ENCODE measurements at regions of chr6 and their contacts with region 1.

Region 1: DNA sequence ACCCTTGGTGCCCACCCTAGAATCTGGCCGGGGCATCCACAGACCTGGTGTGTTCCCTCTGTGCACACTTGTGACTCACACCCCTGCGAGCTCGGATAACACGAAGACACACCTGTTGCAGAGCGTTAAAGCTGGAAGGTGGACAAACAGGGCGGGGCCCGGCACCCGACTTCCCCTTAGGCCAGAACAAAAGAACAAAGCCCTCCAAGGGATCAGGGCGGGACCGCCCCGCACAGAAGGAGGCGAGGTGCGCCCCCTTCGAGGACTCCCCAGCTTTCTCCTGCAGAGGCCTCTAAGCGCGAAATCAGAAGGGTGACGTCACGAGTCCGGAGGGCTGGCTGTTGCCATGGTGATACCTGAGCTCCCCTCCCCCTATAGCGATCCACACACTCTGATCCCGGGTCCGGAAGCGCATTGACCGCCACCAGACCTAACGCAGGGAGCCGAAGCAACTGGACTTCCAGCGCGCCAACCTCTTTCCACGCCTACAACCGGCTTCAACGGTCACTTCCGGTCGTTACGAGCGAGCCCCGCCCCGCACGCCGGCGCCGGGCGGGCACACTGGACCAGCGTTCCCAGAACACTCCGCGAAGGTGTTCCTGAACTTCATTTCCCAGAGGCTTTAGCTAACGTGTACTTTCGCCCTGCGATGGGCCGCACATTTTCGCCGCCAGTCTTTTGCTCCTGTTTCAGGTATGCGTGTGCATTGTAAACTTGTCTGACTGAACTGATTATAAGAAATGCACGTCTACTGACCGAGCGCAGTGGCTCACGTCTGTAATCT is at the start of gene ZNF184:
- DNase-seq: peak; percentile 85
- H3K4me3 Mint-ChIP-seq: peak within 1 kb of the TSS; percentile 89
- H3K27ac Mint-ChIP-seq: peak within 1 kb of the TSS; percentile 93
- H3K4me1 Mint-ChIP-seq: peaks cover 46% of the 10 kb centered on the region
- H3K27me3 Mint-ChIP-seq: no peaks in the 10 kb centered on the region
- total RNA-seq, gene ZNF184: 7.6 and 8.0 TPM in 2 replicates

Region 2: DNA sequence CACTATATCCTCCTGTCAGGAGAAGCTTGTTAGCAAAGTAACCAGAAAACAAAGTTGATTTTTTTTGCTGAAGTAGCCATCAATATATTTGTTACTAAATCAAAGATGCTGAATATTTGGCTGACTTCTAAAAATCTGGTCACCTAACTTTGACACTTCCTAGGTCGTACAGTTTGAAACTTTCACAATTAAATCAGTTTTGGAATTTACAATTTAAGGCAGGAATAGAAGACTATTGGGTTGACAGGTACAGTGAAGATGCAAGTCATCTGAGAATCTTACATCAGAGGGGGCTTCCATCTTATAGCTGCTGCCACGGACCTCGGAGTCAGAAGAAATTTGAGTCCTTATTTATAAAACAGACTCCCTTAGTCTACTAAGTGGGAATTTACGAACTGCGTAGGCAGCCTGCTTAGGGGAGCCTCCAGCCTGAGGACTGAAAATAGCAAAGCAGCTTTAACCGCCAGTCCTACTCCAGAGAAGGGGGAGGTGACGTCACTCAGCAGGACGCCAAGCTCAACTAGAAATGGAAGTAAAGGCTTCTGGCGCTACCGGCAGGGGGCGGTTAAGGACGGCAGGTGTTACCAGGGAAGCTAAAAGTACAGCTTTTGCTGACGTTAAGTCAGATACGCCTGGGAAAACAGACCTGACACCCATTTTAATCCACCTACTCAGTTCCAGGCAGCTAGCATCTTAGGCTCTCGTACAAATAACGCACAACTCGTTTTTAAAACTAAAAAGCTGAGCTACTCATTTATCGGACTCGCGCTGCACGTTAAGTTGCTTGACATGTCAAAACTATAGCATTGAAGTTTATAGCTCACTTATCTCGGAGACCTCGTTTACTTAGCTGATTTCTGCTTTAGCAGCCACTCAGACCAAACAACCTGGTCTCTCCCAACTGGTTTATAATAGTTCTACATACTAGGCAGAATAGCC is 1446.6 kb before region 1 on chr6:
- intact Hi-C with region 1: loop called (anchors 5 kb)
- DNase-seq: peak; percentile 88
- H3K4me3 Mint-ChIP-seq: peak overlapping the region; percentile 85
- H3K27ac Mint-ChIP-seq: peak overlapping the region; percentile 96
- H3K4me1 Mint-ChIP-seq: peaks cover 93% of the 10 kb centered on the region
- H3K27me3 Mint-ChIP-seq: no peaks in the 10 kb centered on the region

Region 3: DNA sequence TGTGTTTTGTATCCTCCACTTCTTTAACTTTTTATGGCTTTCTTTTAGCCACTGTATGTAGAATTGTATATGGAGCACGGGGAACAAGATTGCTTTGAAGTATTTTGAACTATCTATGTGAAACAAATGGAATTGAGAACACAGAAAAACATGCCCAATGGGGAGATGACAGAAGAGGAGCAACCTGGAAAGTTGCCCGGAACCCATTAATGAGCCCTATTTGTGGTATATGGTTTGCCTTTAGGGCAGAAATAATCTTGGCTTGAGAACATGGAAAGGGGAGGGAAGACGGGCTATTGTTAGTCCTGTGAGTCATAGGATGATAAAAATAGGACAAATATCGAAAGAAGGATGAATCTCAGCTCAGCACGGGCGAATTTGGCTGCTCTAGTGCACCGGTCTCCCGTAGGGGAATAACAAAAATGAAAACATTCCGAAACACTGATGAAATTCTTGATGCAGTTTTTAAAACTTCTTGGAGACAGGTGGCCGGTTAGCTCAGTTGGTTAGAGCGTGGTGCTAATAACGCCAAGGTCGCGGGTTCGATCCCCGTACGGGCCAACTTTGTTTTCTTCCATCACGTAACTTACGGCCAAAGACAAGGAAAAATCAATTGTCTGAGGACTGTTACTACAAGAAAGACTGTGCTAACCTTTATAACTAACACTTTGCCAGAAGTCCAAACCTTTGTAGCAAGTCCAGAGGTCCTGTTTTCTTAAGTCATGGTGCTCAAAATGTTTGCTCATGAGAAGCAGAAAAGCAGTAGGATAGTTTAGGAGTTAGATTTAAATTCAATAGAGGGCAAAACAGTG is 919.0 kb before region 1 on chr6:
- intact Hi-C with region 1: loop called (anchors 10 kb)
- DNase-seq: peak; percentile 72
- H3K4me3 Mint-ChIP-seq: no peak overlapping the region
- H3K27ac Mint-ChIP-seq: no peak overlapping the region
- H3K4me1 Mint-ChIP-seq: peaks cover 18% of the 10 kb centered on the region
- H3K27me3 Mint-ChIP-seq: peaks cover 2% of the 10 kb centered on the region

Region 4: DNA sequence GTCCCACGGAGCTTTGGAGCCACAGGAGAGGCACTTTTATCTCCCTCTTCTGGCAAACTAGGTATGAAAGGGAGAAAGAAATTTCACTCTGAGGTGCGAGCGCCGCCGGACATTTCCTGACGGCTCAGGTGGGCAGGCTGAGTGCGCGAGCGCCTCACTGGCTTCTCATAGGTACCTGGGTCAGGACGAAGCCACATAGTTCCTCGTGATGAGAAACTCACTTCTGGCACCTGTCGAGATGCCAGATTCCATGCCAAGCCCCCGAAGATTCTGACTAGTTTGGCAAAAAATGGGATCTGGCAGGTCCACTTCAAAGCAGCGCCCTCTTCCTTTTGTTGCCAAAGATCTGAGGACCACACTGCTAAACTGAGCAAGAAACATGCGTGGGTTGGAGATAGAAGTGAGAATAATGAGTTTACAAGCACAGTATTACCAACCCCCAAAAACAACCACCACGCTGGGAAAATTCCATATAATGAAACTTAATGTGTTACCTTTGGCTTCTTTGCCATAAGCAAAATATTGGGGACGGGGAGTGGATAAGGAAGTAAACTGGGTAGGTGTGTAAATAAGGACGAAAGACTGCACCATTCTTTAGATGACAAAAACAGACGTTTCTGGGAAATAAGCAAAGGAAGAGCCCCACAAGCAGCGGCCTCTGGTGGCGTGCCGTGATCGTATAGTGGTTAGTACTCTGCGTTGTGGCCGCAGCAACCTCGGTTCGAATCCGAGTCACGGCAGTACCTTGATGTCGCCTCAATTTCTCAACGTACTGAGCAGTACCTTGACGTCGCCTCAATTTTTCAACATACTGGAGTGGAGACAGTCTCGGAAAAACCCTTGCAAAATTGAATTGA is 315.1 kb before region 1 on chr6:
- intact Hi-C with region 1: loop called (anchors 2 kb)
- DNase-seq: peak; percentile 70
- H3K4me3 Mint-ChIP-seq: peak overlapping the region; percentile 77
- H3K27ac Mint-ChIP-seq: peak overlapping the region; percentile 80
- H3K4me1 Mint-ChIP-seq: peaks cover 47% of the 10 kb centered on the region
- H3K27me3 Mint-ChIP-seq: peaks cover 2% of the 10 kb centered on the region

Region 5: DNA sequence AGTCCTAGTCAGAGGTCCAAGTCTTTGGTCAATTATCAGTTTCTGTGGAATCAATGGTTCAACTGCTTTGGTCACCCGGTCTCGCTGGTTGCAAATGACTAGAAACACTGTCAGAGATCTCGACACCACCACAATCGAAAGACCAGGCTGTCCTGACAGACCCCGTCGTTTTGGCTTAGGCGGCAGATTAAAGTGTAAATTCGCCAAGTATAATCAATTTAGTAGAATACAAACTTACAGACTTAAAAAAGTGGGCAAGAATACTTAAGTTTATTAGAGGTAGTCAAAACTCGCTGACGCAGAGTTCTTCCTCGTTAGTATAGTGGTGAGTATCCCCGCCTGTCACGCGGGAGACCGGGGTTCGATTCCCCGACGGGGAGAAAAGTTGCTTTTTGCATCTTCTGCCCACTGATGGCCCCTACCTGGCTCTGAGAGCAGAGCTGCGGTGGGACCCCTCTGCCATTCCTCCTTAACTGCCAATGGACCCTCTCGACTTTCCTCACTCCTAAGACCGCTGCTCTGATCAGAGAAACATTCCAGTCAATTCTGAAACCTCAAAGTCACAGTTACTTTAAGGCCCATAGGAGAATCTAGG is 30.7 kb after region 1 on chr6:
- intact Hi-C with region 1: loop called (anchors 1 kb)
- DNase-seq: peak; percentile 60
- H3K4me3 Mint-ChIP-seq: peak overlapping the region; percentile 90
- H3K27ac Mint-ChIP-seq: peak overlapping the region; percentile 82
- H3K4me1 Mint-ChIP-seq: peaks cover 32% of the 10 kb centered on the region
- H3K27me3 Mint-ChIP-seq: peaks cover 42% of the 10 kb centered on the region

Region 6: GRCh38 chr6:28863604-28864320 is 1391.0 kb after region 1 on chr6:
- intact Hi-C with region 1: loop called (anchors 10 kb)
- DNase-seq: peak; percentile 80
- H3K4me3 Mint-ChIP-seq: peak overlapping the region; percentile 94
- H3K27ac Mint-ChIP-seq: peak overlapping the region; percentile 93
- H3K4me1 Mint-ChIP-seq: peaks cover 47% of the 10 kb centered on the region
- H3K27me3 Mint-ChIP-seq: peaks cover 17% of the 10 kb centered on the region